ENCODE measurements at regions of chr5 and their contacts with region 1.

Region 1: DNA sequence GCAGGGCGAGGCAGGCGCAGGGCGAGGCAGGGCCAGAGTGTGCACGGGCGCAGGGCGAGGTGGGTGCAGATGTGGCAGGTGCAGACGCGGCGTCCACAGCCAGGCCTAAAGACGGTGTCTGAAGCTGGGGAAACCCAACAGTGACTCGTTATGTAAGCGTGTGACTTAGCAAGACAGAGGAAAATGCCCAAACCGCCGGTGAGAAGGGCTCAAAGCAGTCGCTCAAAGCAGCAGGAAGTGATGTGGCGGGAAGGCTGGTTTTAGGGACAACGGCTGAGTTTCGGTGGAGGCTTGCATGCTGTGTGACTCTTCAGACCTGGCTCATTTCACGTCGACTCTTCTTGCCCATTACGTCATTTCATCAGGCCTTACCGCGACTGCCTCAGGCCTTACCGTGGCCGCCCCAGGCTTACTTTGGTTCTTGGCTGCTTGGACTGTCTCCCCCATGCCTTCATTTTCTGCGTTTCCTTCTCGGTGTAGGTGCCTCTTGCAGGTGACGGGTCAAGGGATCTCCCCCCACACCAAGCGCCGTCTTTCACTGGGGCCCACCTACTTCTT is 50.5 kb upstream of the EXOC3 start:
- DNase-seq: peak; percentile 98
- ATAC-seq: peak; percentile 96
- H3K4me3 Mint-ChIP-seq: peak overlapping the region; percentile 69
- H3K27ac Mint-ChIP-seq: peak overlapping the region; percentile 93
- H3K4me1 Mint-ChIP-seq: peaks cover 46% of the 10 kb centered on the region
- H3K27me3 Mint-ChIP-seq: no peaks in the 10 kb centered on the region

Region 2: DNA sequence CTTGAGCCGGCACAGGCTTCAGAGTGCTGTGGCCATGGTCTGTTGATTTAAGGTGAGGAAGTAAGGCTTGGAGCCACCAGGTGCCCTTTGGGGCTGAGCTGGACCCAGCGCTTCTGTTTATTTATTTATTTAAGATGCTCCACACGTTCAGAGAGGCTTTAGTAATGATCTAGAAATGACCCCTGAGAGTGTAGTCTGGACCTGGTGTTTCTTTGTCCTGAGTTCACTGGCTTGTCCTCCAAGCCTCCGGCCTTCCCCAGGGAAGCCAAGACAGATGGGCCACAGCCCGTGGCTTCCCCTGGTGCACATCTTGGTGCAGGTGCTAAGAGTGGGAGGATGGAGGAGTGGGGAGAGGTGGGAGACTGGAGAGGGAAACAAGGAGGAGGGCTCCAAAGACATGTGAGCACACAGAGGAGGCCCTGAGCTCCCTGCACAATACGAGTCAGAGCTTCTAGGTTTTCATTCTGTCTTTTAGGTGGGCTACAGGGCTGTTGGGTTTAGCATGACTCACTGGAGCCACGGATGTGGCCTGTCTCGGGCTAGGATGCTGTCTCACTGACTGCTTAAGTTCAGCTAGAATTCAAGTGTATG is 14.1 kb before region 1 on chr5:
- CTCF ChIA-PET with region 1: interaction called, 18 read pairs
- DNase-seq: peak; percentile 89
- ATAC-seq: peak; percentile 89
- H3K4me3 Mint-ChIP-seq: peak overlapping the region; percentile 65
- H3K27ac Mint-ChIP-seq: peak overlapping the region; percentile 96
- H3K4me1 Mint-ChIP-seq: peaks cover 76% of the 10 kb centered on the region
- H3K27me3 Mint-ChIP-seq: no peaks in the 10 kb centered on the region

Region 3: DNA sequence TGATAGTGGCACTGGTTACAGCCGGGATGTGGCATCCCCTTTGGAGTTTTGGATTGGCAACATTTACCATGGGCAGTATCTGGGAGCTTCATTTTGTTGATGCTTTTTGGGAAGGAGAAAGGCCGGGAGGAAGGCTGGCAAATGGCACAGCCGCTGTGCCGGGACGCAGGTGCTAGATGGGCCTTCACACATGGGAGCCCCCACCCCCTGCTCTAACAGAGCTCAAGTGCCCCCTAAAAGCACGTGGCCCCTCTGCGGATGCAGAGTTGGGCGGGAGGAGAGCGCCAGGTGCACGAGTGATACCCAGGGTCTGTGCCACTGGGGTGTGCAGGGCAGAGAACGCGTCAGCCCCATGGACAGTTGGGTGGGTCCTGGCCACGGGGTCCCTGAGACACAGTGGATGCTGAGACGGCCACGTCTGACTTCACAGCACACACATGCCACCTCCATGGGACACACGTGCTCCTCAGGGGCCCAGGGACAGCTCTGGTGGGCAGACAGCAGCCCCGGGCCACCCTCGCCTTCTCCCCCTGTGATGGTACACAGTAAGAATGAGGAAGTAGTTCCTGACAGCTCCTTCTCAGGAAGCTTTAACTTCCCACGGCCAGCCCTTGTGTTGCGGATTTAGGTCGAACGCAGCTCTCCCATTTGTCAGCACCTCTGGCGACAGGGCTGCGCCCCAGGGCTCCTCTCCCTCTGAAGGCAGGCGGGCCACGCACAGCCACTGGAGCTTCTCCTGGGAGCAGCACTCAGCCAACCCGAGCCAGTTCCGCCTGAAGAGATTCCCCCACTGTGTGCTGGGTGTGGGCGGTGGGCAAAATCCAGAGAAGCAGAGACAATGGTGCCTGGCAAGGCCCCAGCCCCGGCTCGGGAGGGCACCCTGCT is 120.9 kb after region 1 on chr5:
- CTCF ChIA-PET with region 1: no interaction called
- DNase-seq: no peak
- ATAC-seq: no peak
- H3K4me3 Mint-ChIP-seq: no peak overlapping the region
- H3K27ac Mint-ChIP-seq: no peak overlapping the region
- H3K4me1 Mint-ChIP-seq: no peaks in the 10 kb centered on the region
- H3K27me3 Mint-ChIP-seq: peaks cover 5% of the 10 kb centered on the region